ENCODE measurements at regions of chr3 and their contacts with region 1.

Region 1: DNA sequence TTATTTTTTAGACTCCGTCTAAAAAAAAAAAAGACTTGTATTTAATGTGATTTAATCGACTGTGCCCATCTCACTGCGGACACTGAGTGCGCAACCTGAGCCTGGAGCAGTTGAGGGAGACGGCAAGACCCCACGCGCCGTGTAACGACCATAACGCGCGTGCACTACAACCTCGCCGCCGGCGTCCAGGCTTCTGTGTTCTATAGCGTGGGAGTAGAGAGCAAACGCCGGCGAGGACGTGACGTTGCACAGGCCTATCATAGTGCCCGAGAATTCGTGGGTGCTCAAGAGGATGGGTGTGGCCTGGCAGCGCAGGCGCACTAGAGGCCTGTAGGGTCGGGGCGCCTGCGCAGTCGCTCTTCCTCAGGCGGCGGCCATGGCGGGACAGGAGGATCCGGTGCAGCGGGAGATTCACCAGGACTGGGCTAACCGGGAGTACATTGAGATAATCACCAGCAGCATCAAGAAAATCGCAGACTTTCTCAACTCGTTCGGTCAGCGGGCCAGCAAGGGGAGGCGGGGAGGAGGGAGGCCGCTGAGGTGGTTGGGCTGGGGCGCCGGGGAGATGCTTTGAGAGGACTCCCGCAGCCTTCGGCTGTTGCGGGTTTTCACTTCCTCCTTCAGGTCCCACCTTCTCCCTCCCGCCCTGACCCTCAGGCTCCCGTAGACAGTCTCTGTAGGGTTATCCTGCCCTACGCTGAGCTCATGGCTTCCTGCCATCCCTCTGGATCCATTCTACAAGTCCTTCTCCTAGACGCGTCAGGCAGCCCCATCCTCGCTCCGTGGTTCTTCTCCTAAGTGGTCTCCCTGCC is at the start of gene BRK1:
- DNase-seq: peak; percentile 90
- H3K4me3 Mint-ChIP-seq: peak within 1 kb of the TSS; percentile 99
- H3K27ac Mint-ChIP-seq: peak within 1 kb of the TSS; percentile 96
- H3K4me1 Mint-ChIP-seq: peaks cover 31% of the 10 kb centered on the region
- H3K27me3 Mint-ChIP-seq: peaks cover 2% of the 10 kb centered on the region
- total RNA-seq, gene BRK1: 97.2 and 105 TPM in 2 replicates

Region 2: DNA sequence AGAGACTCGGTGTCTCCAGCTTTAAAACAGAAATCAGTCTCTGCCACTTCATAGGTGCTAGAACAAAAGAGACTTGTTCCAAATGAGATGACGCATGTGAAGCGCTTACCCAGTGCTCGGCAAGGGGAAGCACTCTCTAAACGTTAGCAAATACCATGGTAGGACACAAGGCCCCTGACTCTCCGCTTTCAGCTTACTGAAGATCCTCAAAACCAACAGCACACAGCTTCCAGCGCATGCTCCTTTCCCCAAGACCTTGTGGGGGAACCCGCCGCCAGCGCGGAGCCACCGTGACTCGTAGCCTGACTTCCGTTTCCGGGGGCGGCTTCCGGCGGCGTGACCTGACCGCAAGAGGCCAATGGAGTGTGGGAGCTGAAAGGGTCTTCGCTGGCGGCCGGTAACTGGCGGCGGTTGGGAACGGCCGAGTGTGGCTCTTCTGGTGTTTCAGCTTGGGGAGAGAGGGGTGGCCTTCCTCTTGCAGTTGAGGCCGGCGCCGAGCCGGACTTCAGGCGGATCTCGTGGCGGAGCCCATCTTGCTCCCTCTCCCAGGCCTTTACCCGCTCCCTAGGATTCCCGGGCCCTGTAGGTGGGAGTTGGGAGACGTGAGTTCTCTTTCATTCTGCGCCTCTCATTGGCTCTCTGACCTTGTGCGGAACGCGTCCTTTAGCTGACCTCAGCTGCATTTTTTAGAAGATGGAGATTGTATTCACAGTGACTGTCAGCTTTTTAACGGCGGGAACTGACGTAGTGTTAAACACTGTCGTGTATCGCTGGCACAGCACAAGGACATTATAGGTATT is 752.6 kb before region 1 on chr3 and contains the start of gene THUMPD3:
- intact Hi-C with region 1: loop called (anchors 5 kb)
- DNase-seq: peak; percentile 90
- H3K4me3 Mint-ChIP-seq: peak within 1 kb of the TSS; percentile 96
- H3K27ac Mint-ChIP-seq: peak within 1 kb of the TSS; percentile 98
- H3K4me1 Mint-ChIP-seq: peaks cover 6% of the 10 kb centered on the region
- H3K27me3 Mint-ChIP-seq: peaks cover 2% of the 10 kb centered on the region
- total RNA-seq, gene THUMPD3: 61.4 and 62.4 TPM in 2 replicates

Region 3: DNA sequence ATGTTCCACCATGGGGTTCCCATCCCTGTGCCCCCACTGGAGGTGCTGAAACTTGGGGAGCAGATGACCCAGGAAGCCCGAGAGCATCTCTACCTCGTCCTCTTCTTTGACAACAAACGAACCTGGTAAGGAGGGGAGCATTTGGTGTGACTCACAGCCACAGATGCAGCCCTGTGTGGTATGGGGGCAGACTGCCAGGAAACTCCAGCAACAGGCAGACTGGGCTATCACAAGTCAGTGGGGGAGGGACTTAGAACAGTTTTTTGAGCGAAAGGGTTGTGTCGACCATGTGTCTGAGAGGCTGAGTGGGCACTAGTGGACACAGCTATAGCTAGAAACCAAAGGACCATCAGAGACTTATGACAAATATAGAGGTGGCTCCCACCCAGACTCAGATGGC is 369.2 kb before region 1 on chr3:
- intact Hi-C with region 1: no loop called
- DNase-seq: no peak
- H3K4me3 Mint-ChIP-seq: no peak overlapping the region
- H3K27ac Mint-ChIP-seq: no peak overlapping the region
- H3K4me1 Mint-ChIP-seq: peaks cover 38% of the 10 kb centered on the region
- H3K27me3 Mint-ChIP-seq: no peaks in the 10 kb centered on the region

Region 4: DNA sequence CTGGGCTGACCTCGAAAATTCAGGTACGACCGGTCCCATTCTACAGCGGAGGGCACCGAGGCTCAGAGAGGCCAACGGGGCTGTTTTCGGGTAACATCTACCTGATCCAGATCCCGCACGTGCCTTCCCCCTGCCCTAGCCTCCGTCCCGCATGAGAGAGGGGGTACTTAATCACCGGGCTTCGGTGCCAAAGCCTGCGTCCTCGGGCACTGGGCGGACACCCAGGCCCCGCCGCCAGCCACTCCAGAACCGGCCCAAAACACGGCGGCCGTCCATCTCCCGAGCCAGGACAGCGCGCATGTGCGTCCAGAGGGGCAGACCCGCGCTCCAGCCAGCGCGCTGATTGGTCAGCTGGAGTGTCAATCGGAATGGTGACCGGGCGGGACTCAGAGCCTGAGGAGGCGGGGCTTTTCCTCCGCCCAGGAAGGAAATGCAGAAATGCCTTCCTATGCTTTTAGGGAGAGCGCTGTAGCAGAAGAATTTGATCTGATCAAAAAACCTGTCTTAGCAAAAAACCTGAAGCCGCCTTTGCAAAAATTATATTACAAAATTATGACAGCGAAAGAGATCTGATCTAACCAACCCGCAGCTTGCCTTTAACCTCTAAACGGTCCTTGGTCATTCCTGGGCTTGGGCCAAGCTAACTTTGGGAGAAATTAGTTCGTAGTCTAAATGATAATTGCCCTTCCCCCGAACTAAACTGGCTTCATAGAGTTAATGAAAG is 271.7 kb before region 1 on chr3 and contains the start of gene RPUSD3:
- intact Hi-C with region 1: loop called (anchors 10 kb)
- DNase-seq: peak; percentile 95
- H3K4me3 Mint-ChIP-seq: peak within 1 kb of the TSS; percentile 98
- H3K27ac Mint-ChIP-seq: peak within 1 kb of the TSS; percentile 91
- H3K4me1 Mint-ChIP-seq: peaks cover 28% of the 10 kb centered on the region
- H3K27me3 Mint-ChIP-seq: no peaks in the 10 kb centered on the region
- total RNA-seq, gene RPUSD3: 79.2 and 79.5 TPM in 2 replicates

Region 5: GRCh38 chr3:10026084-10026890 is 89.2 kb before region 1 on chr3 and contains the start of gene FANCD2:
- intact Hi-C with region 1: loop called (anchors 1 kb)
- DNase-seq: peak; percentile 90
- H3K4me3 Mint-ChIP-seq: peak within 1 kb of the TSS; percentile 98
- H3K27ac Mint-ChIP-seq: peak within 1 kb of the TSS; percentile 99
- H3K4me1 Mint-ChIP-seq: peaks cover 33% of the 10 kb centered on the region
- H3K27me3 Mint-ChIP-seq: no peaks in the 10 kb centered on the region
- total RNA-seq, gene FANCD2: 63.4 and 64.2 TPM in 2 replicates

Region 6: GRCh38 chr3:10164546-10165393 is 49.2 kb after region 1 on chr3 and contains the start of gene IRAK2:
- intact Hi-C with region 1: loop called (anchors 2 kb)
- DNase-seq: peak; percentile 51
- H3K4me3 Mint-ChIP-seq: peak within 1 kb of the TSS; percentile 82
- H3K27ac Mint-ChIP-seq: peak within 1 kb of the TSS; percentile 44
- H3K4me1 Mint-ChIP-seq: peaks cover 35% of the 10 kb centered on the region
- H3K27me3 Mint-ChIP-seq: no peaks in the 10 kb centered on the region
- total RNA-seq, gene IRAK2: 8.1 and 8.6 TPM in 2 replicates

Region 7: GRCh38 chr3:10224784-10225665 is 109.5 kb after region 1 on chr3:
- intact Hi-C with region 1: loop called (anchors 1 kb)
- DNase-seq: peak; percentile 45
- H3K4me3 Mint-ChIP-seq: peak overlapping the region; percentile 73
- H3K27ac Mint-ChIP-seq: peak overlapping the region; percentile 97
- H3K4me1 Mint-ChIP-seq: peaks cover 74% of the 10 kb centered on the region
- H3K27me3 Mint-ChIP-seq: peaks cover 3% of the 10 kb centered on the region

Region 8: GRCh38 chr3:10263646-10264363 is 148.3 kb after region 1 on chr3:
- intact Hi-C with region 1: loop called (anchors 1 kb)
- DNase-seq: peak; percentile 51
- H3K4me3 Mint-ChIP-seq: peak overlapping the region; percentile 79
- H3K27ac Mint-ChIP-seq: peak overlapping the region; percentile 80
- H3K4me1 Mint-ChIP-seq: peaks cover 74% of the 10 kb centered on the region
- H3K27me3 Mint-ChIP-seq: no peaks in the 10 kb centered on the region

Measured in activated T-helper 1 cell treated with anti-CD3 and anti-CD28 coated beads, Interleukin-12 subunit alpha, Interleukin-12 subunit beta, Interleukin-2, Interleukin-4 antibody, amounts not matched to agents 30 ng/mL and 10 ng/mL and 1 ng/mL, durations not matched to agents 14 hours and 24 hours and 36 hours (primary cell).